Motor neuron (in vitro differentiated cells): ENCODE measurements at regions of chr1 and their contacts with region 1.

Region 1: DNA sequence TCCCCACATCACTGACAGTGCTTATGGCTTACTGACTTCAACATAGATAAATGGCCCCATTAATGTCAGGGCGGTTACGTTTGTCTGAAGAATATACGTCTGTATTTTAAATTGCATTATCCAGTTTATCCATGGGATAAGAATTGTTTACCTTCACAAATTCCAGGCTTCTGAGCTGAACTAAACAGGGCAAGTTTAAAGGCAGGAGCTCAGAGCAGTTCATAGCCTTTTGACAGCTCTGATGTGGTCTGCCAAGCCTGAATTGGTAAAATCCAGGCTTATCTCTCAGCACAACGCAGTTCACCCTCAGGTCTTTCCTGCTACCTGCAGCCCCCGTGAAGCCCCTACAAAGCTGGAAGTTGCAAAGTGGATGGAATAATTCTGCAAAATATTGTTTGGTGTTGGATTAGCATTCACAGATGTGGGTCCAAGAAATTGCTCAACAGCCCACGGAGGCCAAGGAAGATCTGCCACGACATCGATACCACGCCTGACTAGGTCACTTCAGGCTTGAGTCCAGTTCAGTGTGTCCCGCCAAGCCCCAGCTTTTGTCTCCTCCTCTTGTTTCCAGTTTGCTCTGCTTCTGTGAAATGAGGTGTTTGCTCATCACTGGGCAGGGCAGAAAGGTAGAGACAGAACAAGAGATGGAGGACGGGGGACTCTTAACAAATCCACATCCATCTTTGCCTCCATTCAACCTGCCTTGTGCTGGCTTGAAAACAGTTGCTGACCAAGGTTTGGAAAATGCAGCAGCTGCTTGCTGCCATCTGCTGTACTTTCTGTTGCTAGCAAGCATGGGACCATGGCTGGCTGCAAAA is 79.8 kb upstream of the GREM2 start:
- ATAC-seq: peak in 7 of 8 experiments; percentile 62 to 86 (median 78)
- H3K4me3 ChIP-seq: no peak overlapping the region
- H3K27ac ChIP-seq: no peak overlapping the region
- H3K4me1 ChIP-seq: no peaks in the 10 kb centered on the region

Region 2: DNA sequence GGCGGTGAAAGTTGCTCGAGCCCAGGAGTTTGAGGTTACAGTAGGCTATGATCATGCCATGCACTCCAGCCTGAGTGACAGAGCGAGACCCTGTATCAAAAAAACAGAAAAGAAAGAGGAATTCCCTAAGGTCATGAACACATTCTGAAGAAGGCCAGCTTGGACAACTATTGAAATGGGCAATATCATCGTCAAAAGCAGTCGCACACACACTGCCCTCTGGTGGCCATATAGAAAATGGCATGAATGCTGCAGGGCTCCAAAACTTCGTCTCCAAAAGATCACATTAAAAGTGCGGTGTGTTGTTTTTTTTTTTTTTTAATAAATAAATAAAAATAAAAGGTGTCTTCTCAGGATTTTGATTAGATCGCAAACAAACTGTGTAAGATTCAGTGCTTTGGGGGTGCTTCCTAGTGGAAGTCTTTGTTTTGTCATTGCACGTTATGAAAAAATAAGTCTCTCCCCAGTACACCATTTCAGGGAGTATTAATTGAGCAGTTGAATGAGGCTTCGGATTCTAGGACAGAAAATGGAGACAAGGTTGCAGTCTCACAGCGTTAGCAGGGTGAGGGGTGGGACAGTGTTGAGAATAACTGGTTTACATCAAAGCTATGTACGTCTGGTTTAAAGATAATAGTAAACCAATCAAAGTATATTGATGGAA is 687.5 kb before region 1 on chr1:
- in situ Hi-C with region 1: loop called in 2 of 9 experiments (anchors 25 kb)
- ATAC-seq: no peak
- H3K4me3 ChIP-seq: no peak overlapping the region
- H3K27ac ChIP-seq: no peak overlapping the region
- H3K4me1 ChIP-seq: no peaks in the 10 kb centered on the region

Region 3: DNA sequence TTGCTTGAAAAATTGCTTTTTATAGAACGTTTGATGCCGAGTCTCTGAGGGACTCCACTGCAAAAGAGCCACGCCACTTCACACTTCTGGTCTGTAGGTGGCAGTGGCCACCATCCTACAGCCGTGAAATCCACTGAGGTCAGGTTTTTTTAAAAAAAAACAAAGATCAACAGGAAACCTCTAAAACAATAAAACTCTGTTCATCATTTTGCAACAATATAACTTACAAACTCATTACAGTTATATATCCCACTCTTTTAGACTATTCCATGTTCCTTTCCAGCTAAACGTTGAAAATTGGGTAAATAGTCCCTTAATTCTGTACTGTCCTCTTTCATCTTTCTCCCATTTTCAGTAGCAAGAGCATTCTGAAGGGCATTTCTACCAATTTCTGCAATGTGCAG is 664.7 kb before region 1 on chr1:
- in situ Hi-C with region 1: loop called in 3 of 9 experiments (anchors 25 kb)
- ATAC-seq: peak; percentile 53 to 80 (median 72)
- H3K4me3 ChIP-seq: no peak overlapping the region
- H3K27ac ChIP-seq: no peak overlapping the region
- H3K4me1 ChIP-seq: no peaks in the 10 kb centered on the region

Region 4: DNA sequence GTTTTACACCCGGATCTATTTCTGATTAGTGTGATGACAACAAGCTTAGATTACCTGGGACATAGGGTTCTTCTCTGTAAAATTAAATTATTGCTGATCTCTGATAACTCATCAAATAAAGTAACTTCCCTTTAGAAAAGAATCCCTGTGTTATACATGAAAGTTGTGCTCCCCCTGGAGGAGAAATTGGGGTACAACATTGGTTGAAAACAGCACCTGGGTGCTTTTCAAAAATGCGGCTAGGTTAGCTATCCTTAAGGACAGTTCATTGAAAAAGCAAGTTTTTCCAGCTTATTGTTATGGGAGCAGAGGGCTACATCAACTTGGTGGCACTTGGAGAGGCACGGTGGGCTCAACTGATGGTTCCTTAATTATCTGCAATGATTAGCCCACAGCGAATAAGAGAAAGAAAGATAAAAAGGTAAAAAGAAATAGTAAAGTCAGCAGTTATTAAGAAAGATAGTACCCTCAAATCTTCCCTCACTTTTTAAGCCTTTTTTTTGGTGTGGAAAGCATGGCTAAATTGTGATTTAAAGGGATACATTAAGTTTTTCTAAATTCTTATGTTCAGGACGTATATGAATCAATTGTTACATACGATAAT is 502.2 kb before region 1 on chr1:
- in situ Hi-C with region 1: loop called in 4 of 9 experiments (anchors 10 to 25 kb)
- ATAC-seq: no peak
- H3K4me3 ChIP-seq: no peak overlapping the region
- H3K27ac ChIP-seq: no peak overlapping the region
- H3K4me1 ChIP-seq: peaks cover 0 to 3% of the 10 kb centered on the region in 2 donors

Region 5: GRCh38 chr1:240455228-240455821 is 236.4 kb before region 1 on chr1:
- in situ Hi-C with region 1: loop called in 1 of 9 experiments (anchors 25 kb)
- ATAC-seq: peak in 2 of 8 experiments; percentile 16 to 53
- H3K4me3 ChIP-seq: no peak overlapping the region
- H3K27ac ChIP-seq: no peak overlapping the region
- H3K4me1 ChIP-seq: no peaks in the 10 kb centered on the region

Region 6: GRCh38 chr1:240539769-240540414 is 151.8 kb before region 1 on chr1:
- in situ Hi-C with region 1: no loop called
- ATAC-seq: peak in 4 of 8 experiments; percentile 27 to 97 (median 39)
- H3K4me3 ChIP-seq: no peak overlapping the region
- H3K27ac ChIP-seq: no peak overlapping the region
- H3K4me1 ChIP-seq: no peaks in the 10 kb centered on the region